Activated CD4-positive, alpha-beta memory T cell treated with anti-CD3 and anti-CD28 coated beads for 36 hours (primary cell): ENCODE measurements at regions of chr15 and their contacts with region 1.

Region 1: GRCh38 chr15:89057504-89058133 is 30.6 kb upstream of the ABHD2 start:
- DNase-seq: peak; percentile 90
- H3K4me3 Mint-ChIP-seq: no peak overlapping the region
- H3K27ac Mint-ChIP-seq: no peak overlapping the region
- H3K4me1 Mint-ChIP-seq: peaks cover 11% of the 10 kb centered on the region
- H3K27me3 Mint-ChIP-seq: no peaks in the 10 kb centered on the region

Region 2: DNA sequence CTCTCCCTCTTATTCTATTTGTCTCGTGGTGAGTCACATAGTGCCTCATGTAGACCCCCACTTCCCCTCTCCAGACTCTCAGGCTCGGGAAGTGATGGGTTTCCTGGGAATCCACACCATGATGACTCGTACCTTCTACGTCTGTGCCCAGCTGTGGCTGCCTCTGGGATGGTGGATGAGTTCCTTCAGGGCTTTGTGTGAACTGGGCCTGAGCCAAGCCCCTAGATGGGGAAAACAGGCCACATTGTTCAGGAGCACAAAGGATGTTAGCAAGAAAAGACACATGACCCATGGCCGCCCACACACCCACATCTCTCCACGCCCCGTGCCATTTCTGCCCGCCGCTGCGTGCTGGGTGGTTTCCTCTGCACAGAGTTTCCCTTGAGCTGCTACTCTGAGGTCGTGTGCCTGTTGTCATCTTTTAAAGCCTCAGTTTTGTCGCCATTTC is 408.3 kb before region 1 on chr15:
- CTCF ChIA-PET with region 1: no interaction called
- POLR2A ChIA-PET with region 1: no interaction called
- intact Hi-C with region 1: no loop called
- DNase-seq: peak; percentile 90
- H3K4me3 Mint-ChIP-seq: peak overlapping the region; percentile 46
- H3K27ac Mint-ChIP-seq: peak overlapping the region; percentile 92
- H3K4me1 Mint-ChIP-seq: peaks cover 68% of the 10 kb centered on the region
- H3K27me3 Mint-ChIP-seq: no peaks in the 10 kb centered on the region

Region 3: DNA sequence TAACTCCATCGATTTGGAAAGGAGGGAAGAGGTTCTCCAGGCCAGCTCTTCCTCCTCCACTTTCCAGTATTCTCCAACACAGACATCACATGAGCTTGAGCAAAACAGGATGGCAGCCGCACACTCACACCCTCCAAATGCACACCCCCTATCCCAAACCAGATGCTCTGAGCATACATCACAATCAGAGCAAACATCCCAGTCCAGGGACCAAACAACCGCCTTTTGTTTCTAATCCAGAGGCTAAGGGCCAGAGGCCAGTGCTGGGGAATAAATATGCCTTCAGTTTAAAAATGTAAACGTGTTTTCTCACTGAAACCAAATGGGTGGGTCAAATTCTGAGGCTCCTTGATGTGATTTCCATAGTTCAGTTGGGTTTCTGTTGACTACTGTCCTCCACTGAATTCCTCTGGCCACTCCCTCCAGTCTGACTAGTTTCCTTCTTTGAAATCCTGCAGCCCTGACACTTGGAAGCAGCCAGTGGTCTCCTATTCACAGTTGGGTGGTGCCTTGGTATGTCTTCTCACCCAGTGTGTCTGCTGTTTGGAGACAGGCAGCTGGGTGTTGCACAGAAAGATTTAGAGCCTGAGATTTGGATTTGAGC is 125.2 kb before region 1 on chr15:
- CTCF ChIA-PET with region 1: no interaction called
- POLR2A ChIA-PET with region 1: no interaction called
- intact Hi-C with region 1: no loop called
- DNase-seq: no peak
- H3K4me3 Mint-ChIP-seq: no peak overlapping the region
- H3K27ac Mint-ChIP-seq: no peak overlapping the region
- H3K4me1 Mint-ChIP-seq: no peaks in the 10 kb centered on the region
- H3K27me3 Mint-ChIP-seq: peaks cover 9% of the 10 kb centered on the region

Region 4: GRCh38 chr15:89068325-89068784 is 10.7 kb after region 1 on chr15:
- CTCF ChIA-PET with region 1: interaction called, 13 read pairs
- POLR2A ChIA-PET with region 1: no interaction called
- intact Hi-C with region 1: no loop called
- DNase-seq: peak; percentile 78
- H3K4me3 Mint-ChIP-seq: no peak overlapping the region
- H3K27ac Mint-ChIP-seq: peak overlapping the region; percentile 57
- H3K4me1 Mint-ChIP-seq: peaks cover 12% of the 10 kb centered on the region
- H3K27me3 Mint-ChIP-seq: peaks cover 2% of the 10 kb centered on the region

Region 5: GRCh38 chr15:89119489-89120123 is 62.0 kb after region 1 on chr15:
- CTCF ChIA-PET with region 1: interaction called, 10 read pairs
- POLR2A ChIA-PET with region 1: no interaction called
- intact Hi-C with region 1: no loop called
- DNase-seq: peak; percentile 27
- H3K4me3 Mint-ChIP-seq: no peak overlapping the region
- H3K27ac Mint-ChIP-seq: peak overlapping the region; percentile 39
- H3K4me1 Mint-ChIP-seq: peaks cover 13% of the 10 kb centered on the region
- H3K27me3 Mint-ChIP-seq: no peaks in the 10 kb centered on the region